ENCODE measurements at regions of chr2 and their contacts with region 1.

Region 1: DNA sequence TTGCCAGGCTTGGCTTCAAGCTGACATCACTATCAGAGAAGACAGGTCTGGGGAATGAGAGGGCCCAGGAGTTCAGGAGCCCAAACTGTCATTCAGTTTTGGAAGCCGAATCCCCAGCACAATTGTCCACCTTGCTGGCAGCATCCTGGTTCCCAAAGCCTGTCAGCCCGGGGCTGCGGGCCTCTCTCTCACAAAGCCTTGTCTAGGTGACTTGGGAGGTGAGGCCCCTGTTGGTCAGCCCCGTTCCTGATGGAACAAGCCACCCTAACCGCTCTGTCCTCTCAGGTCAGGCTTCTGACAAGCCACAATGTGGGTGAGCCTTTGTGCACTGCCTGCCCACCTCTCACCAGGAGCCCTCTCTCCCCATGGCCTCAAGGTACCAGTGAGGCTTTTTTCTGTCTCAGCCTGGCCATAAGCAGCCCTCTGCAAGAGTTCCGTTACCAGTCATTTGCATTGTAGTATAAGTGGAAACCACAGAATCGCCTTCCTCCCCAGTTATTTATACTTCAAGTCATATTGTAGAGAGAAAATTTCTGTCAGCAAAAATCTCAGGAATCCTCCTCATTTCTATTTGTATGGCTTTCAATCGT is 100.6 kb downstream of the MSH2 start:
- DNase-seq: peak; percentile 81
- H3K4me3 ChIP-seq: peak overlapping the region; percentile 43
- H3K27ac ChIP-seq: peak overlapping the region; percentile 92
- H3K4me1 ChIP-seq: peaks cover 37% of the 10 kb centered on the region
- CTCF ChIP-seq: no peak

Region 2: GRCh38 chr2:47437287-47437686 is 66.3 kb before region 1 on chr2:
- CTCF ChIA-PET with region 1: no interaction called
- POLR2A ChIA-PET with region 1: no interaction called
- intact Hi-C with region 1: loop called (anchors 5 kb)
- DNase-seq: peak; percentile 50
- H3K4me3 ChIP-seq: no peak overlapping the region
- H3K27ac ChIP-seq: no peak overlapping the region
- H3K4me1 ChIP-seq: peaks cover 4% of the 10 kb centered on the region
- CTCF ChIP-seq: peak; percentile 75

Measured in OCI-LY7 (cell line).